ENCODE measurements at regions of chr11 and their contacts with region 1.

Region 1: GRCh38 chr11:19951558-19952115 is 208.6 kb downstream of the DBX1 start:
- DNase-seq: no peak
- ATAC-seq: peak; percentile 76

Region 2: GRCh38 chr11:19800162-19800561 is 151.5 kb before region 1 on chr11:
- intact Hi-C with region 1: no loop called
- DNase-seq: peak in 1 of 2 donors; percentile 37
- ATAC-seq: no peak

Region 3: DNA sequence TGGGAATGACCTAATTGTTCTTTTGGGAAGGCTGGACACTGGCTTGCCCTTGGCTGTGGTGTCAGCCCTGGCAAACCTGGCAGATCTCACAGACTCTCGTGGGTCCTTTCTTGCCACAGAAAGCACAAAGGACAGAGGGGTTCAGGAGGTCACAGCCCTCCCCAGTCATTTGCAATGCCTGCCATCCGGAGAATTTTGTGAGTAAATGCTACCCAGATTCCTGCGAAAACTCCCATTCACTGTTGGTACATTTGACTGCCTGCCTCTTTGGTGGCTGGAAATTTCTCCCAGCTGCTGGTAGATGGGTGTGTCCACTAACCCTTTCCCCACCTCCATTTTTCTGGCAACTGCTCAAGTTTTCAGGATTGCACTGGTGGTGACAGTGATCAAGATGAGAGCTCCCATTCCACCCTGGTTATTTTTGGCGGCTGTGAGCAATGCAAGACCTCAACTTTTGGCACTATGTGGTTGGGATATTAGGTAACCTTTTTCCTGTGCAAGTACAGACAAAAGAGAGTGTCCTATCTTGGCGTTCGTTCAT is 83.3 kb before region 1 on chr11:
- intact Hi-C with region 1: no loop called
- DNase-seq: no peak
- ATAC-seq: peak; percentile 29

Region 4: DNA sequence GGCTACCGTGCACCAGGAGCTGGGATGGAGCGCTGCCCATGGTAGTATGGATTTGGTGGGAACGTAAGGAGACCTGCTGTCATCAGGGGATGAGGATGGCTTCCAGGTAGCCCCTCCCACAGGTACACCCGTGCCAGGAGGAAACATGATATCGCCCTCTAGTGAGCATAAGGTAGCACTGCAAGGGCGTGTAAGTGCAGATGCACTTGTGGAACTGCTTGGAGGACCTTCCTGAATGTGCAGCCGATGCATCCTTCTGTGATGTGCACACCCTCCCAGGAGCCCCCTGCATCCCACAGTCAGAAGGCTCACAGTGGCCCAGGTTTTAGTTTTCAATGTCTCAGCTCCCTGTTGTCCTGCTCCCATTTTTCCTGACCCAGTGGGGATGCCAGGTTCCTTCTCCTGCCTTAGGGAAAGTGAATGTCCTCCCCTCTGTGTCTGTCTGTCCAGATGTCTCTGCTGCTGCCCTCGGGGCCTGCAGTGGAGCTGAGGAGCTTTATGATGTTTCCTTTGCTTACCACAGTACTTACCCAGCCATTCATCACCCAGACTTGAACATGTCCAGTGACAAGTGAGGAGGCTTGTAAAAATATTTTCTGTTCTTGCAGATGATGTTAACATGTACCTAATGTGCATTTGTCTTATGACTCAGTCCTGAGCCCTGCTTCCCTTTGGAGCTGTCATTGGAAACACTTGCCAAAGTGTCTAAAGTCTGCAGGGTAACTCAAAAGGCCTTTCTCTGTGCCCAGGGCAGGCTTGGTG is 159.5 kb after region 1 on chr11:
- intact Hi-C with region 1: loop called (anchors 5 to 10 kb)
- DNase-seq: peak; percentile 41 to 48
- ATAC-seq: peak; percentile 69

Region 5: DNA sequence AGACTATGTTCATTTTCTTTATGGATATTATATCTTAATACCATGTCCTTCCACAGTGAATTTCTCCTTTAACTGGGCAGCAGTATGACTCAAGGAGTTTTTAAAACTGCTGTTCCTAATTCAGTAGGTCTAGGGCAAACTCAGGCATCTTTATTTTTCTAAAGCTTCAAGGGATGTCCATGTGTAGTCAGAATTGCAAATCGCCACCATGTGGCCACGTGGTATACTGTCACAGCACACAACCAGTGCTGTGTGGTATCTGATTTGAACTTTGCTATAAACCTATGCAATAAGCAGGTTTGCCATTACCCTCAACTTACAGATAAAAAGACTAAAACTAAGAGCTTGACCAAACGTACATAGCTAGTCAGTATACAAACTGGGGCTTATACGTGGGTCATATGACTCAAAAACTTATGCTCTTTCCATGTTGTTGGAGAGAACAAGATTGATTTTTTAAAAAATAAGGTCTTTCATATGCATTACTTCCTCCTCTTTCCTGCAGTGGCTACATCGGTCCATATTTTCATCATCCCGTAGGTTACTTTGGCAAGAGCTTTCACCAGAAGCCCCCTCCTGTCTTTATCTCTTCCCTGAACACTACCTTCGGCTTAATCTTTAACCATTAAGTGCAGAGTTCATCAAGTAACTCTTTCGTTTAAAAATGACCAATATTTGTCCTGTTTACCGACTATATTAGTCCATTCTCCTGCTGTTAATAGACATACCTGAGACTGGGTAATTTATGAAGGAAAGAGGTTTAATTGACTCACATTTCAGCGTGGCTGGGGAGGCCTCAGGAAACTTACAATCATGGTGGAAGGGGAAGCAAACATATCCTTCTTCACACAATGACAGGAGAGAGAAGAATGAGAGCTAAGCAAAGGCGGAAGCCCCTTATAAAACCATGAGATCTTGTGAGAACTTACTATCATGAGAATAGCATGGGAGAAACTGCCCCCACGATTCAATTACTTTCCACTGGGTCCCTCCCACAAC is 403.9 kb after region 1 on chr11:
- intact Hi-C with region 1: loop called in 1 of 2 experiments (anchors 10 kb)
- DNase-seq: peak; percentile 33 to 59
- ATAC-seq: peak; percentile 85

Measured in left colon (tissue), 2 donors.